Activated T-helper 2 cell treated with anti-CD3 and anti-CD28 coated beads, Interferon-gamma antibody, Interleukin-2, Interleukin-4, amounts not matched to agents 10 μg/mL and 5 μg/mL and 100 μg/mL, durations not matched to agents 14 hours and 24 hours and 36 hours (primary cell): ENCODE measurements at regions of chr5 and their contacts with region 1.

Region 1: DNA sequence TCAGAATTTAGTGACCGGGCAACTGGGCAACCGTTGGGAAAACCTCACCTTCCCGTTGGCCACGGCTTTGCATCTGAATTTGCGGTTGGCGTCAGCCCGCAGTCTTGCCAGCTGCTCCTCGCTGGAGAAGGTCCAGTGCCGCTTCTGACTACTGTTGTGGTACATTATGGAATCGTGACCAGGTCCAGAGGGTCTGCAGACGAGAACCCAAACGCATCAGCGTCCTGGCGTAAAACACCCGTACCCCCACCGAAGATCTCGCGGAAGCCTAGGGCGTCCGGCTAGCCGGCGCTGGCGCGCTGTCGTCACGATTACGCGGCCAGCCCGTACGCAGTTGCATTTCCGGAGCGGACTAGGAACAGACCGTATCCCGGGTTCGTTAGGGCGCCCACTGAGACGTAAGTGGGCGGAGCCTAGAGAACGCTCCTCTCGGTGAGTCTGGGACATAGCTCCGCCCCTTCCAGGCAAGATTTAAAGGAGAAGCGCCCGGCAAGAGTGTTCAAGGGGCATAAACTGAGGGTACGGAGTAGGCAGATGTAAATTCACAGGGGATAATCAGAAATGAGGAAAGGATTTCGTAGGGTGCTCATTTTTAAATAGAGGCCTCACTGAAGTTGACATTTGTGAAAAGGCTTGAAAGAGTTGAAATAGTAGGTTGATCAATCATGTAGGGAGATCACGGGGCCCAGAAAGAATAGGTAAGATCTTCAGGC is at the start of gene CCNH:
- DNase-seq: peak; percentile 95
- H3K4me3 Mint-ChIP-seq: peak within 1 kb of the TSS; percentile 99
- H3K27ac Mint-ChIP-seq: peak within 1 kb of the TSS; percentile 96
- H3K4me1 Mint-ChIP-seq: peaks cover 26% of the 10 kb centered on the region
- H3K27me3 Mint-ChIP-seq: peaks cover 4% of the 10 kb centered on the region
- total RNA-seq, gene CCNH: 68.2 and 70.1 TPM in 2 replicates

Region 2: GRCh38 chr5:86617756-86618576 is 794.8 kb before region 1 on chr5 and contains the start of gene COX7C:
- intact Hi-C with region 1: loop called (anchors 1 kb)
- DNase-seq: peak; percentile 90
- H3K4me3 Mint-ChIP-seq: peak within 1 kb of the TSS; percentile 97
- H3K27ac Mint-ChIP-seq: peak within 1 kb of the TSS; percentile 94
- H3K4me1 Mint-ChIP-seq: peaks cover 13% of the 10 kb centered on the region
- H3K27me3 Mint-ChIP-seq: peaks cover 6% of the 10 kb centered on the region
- total RNA-seq, gene COX7C: 445 and 457 TPM in 2 replicates

Region 3: GRCh38 chr5:86917117-86917579 is 495.6 kb before region 1 on chr5:
- intact Hi-C with region 1: loop called (anchors 1 kb)
- DNase-seq: peak; percentile 8
- H3K4me3 Mint-ChIP-seq: no peak overlapping the region
- H3K27ac Mint-ChIP-seq: no peak overlapping the region
- H3K4me1 Mint-ChIP-seq: peaks cover 19% of the 10 kb centered on the region
- H3K27me3 Mint-ChIP-seq: peaks cover 27% of the 10 kb centered on the region

Region 4: DNA sequence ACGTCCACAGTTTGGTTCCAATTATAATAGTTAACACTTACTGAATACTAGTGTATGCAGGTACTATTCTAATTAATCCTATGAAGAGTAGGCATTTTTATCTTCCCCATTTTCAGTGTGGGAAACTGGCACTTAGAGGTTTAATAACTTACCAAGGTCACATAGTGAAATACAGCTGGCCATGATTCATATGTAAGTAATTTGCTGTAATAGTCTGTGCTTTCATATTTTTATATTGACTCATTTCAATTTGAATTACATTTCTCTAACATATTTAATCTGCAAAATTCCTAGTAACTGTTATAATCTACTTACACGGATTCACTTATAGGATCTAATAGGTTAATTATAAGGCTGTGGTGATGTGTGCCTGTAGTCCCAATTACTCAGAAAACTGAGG is 19.5 kb before region 1 on chr5:
- intact Hi-C with region 1: no loop called
- DNase-seq: no peak
- H3K4me3 Mint-ChIP-seq: no peak overlapping the region
- H3K27ac Mint-ChIP-seq: no peak overlapping the region
- H3K4me1 Mint-ChIP-seq: peaks cover 15% of the 10 kb centered on the region
- H3K27me3 Mint-ChIP-seq: no peaks in the 10 kb centered on the region

Region 5: DNA sequence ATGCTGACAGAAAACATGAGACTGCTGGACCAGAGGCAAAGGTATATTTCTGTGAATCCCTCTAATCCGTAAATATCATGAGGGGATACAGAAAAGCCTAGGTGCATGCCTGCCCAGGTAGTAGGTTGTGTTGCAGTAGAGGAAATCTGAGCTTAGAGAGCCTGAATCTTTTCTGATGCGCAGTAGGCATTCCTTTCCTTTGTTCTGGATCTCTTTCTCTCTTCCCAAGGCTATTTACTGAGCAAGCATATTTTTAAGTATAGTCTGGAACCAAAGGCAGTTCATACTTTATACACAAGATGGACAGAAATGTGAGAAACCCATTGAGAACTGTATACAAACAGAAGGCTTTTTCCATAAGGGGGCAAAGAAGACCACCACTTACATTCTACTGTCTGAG is 496.6 kb after region 1 on chr5:
- intact Hi-C with region 1: no loop called
- DNase-seq: no peak
- H3K4me3 Mint-ChIP-seq: no peak overlapping the region
- H3K27ac Mint-ChIP-seq: no peak overlapping the region
- H3K4me1 Mint-ChIP-seq: no peaks in the 10 kb centered on the region
- H3K27me3 Mint-ChIP-seq: no peaks in the 10 kb centered on the region